Right ventricle myocardium inferior (tissue), 1 donor: ENCODE measurements at regions of chr19 and their contacts with region 1.

Region 1: GRCh38 chr19:39328046-39328705 is 7.5 kb upstream of the LRFN1 start:
- DNase-seq: peak; percentile 96
- ATAC-seq: peak; percentile 59

Region 2: DNA sequence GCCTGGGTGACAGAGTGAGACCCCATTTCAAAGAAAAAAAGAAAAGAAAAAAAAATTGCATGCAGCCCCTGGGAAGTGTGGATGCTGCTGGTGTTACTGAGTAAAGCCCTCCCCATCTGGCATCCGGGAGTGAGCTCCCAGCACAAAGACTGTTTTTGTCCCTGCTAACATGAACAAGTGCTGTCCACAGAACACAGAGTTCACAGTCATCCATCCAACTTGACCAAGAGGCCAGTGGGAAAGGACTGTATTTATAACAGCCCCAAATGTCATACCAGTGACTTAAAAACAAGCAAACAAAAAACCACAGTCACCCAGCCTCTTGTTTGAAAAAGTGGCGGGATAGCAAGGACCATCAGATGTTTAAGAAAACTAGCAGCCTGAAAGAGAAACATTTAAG is 363.4 kb before region 1 on chr19:
- intact Hi-C with region 1: loop called (anchors 10 kb)
- DNase-seq: no peak
- ATAC-seq: no peak

Region 3: GRCh38 chr19:39363901-39364457 is 35.8 kb after region 1 on chr19:
- intact Hi-C with region 1: no loop called
- DNase-seq: peak; percentile 76
- ATAC-seq: peak; percentile 77

Region 4: DNA sequence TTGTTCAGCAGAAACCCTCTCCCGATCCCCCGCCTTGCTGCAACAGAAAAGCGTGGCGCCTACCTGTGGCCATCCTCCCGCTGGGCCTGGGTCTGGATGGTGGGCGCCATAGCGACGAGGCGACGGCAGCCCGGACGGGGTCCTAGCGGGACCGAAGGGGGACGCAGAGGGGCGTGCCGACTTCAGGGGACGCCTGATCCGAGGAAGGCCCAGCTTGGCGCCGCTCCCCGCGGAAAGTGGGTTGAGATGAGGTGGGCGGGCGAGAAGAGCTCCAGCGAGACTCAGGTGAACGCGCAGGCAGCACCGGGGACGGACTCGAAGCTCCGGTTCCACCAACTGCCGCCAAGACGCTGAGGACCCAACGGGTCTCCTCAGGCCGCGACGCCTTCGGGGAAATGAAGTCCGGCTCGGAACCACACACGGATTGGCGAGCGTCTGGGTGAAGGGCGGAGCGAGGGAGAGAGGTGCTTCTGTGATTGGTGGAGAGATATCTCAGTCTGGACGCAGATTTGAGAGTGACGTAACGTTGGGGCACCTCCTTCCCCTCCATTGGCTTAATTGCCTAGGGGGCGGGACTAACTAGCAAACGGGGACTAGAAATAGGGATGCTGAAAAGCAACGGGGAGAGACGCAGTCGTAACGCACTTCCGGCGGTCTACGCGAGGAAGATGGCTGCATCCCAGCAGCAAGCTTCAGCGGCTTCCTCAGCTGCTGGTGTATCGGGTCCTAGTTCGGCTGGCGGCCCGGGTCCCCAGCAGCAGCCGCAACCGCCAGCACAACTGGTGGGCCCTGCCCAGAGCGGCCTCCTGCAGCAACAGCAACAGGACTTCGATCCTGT is 62.8 kb after region 1 on chr19 and contains the starts of genes MED29 and PAF1:
- intact Hi-C with region 1: no loop called
- DNase-seq: peak; percentile 97
- ATAC-seq: peak; percentile 97
- total RNA-seq, gene MED29: 21.8 TPM
- total RNA-seq, gene PAF1: 34.5 TPM